ENCODE measurements at regions of chr1 and their contacts with region 1.

Region 1: GRCh38 chr1:205658943-205659581 is 21.2 kb downstream of the SLC45A3 start:
- DNase-seq: peak; percentile 75
- ATAC-seq: peak; percentile 95
- H3K4me3 Mint-ChIP-seq: no peak overlapping the region
- H3K27ac Mint-ChIP-seq: no peak overlapping the region
- H3K4me1 Mint-ChIP-seq: peaks cover 20% of the 10 kb centered on the region
- H3K27me3 Mint-ChIP-seq: no peaks in the 10 kb centered on the region
- CTCF ChIP-seq: peak; percentile 81

Region 2: DNA sequence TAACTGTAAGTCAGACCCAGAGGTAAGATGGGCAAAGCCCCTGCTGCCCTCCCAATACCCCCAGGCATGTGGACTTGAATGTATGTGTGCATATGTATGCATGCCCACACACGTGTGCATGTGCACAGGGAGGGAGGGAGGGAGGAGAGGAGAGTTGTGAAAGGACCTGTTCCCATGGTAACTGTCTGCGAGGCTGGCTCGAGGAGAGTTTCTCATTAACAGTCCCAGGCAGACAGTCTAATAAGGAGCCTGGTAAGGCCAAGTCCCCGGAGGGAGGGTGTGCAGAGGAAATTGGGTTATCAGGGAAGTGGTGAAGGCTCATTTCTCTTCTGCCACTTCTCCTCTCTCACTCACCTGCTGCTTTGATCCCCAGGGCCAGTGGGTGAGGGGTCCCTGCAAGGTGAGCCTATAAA is 713.5 kb before region 1 on chr1:
- CTCF ChIA-PET with region 1: no interaction called
- POLR2A ChIA-PET with region 1: no interaction called
- intact Hi-C with region 1: no loop called
- DNase-seq: no peak
- ATAC-seq: no peak
- H3K4me3 Mint-ChIP-seq: no peak overlapping the region
- H3K27ac Mint-ChIP-seq: no peak overlapping the region
- H3K4me1 Mint-ChIP-seq: no peaks in the 10 kb centered on the region
- H3K27me3 Mint-ChIP-seq: peaks cover 4% of the 10 kb centered on the region
- CTCF ChIP-seq: no peak

Region 3: DNA sequence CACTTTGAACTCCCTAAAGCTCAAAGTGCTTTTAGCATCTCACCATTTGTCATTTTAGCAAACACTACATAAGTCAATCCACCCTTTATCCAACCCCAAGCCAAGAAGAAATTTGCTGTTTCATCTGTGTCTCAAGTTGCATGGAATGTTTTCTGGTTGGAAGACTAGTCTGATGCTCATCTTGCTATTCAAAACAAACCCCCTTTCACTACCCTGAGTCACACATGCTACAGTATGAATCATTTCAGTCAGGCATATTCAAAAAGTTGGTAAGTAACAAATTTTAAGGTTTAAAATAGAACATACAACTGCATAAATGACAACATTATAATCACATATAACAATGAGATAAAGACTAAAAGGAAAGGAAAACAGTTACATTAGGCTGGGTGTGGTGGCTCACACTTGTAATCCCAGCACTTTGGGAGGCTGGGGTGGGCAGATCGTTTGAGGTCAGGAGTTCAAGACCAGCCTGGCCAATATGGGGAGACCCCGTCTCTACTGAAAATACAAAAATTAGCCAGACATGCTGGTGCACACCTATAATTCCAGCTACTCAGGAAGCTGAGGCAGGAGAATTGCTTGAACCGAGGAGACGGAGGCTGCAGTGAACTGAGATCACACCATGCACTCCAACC is 486.2 kb before region 1 on chr1:
- CTCF ChIA-PET with region 1: no interaction called
- POLR2A ChIA-PET with region 1: no interaction called
- intact Hi-C with region 1: no loop called
- DNase-seq: no peak
- ATAC-seq: no peak
- H3K4me3 Mint-ChIP-seq: no peak overlapping the region
- H3K27ac Mint-ChIP-seq: no peak overlapping the region
- H3K4me1 Mint-ChIP-seq: no peaks in the 10 kb centered on the region
- H3K27me3 Mint-ChIP-seq: no peaks in the 10 kb centered on the region
- CTCF ChIP-seq: no peak

Region 4: DNA sequence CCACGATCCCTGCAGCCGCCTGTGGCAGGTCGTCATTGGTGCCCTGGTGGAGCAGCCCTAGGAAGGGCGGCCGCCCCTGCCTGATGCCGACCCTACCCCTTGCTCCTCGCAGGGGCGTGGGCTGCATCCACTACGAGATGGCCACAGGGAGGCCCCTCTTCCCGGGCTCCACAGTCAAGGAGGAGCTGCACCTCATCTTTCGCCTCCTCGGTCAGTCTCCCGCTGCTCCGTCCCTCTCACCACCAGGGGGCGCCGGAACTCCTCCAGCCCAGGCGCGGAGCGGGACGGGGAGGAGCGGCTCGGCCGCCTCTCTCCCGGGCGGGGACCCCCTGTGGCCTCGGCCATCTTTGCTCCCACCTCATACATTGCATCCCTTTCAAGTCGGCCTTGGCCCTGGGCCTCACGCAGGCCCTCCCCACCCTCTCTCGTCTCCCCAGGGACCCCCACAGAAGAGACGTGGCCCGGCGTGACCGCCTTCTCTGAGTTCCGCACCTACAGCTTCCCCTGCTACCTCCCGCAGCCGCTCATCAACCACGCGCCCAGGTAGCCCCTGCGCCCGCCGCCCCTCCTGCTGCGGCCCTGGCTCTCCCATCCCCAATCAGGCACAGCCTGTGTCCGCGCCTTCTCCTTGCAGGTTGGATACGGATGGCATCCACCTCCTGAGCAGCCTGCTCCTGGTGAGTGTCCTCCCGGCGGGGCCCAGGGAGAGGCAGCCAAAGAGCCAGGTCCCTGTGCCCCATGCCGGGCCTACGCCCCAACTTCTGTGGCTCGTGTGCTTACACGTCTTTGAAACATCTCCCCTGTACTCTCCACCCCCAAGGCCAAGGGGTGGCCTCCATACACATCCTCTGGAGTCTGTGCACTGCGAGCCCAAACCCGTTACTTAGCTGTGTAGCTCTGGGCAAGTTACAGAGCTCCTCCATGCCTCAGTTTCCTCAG is 129.9 kb before region 1 on chr1:
- CTCF ChIA-PET with region 1: interaction called, 88 read pairs
- POLR2A ChIA-PET with region 1: no interaction called
- intact Hi-C with region 1: loop called (anchors 1 kb)
- DNase-seq: peak; percentile 84
- ATAC-seq: peak; percentile 92
- H3K4me3 Mint-ChIP-seq: peak overlapping the region; percentile 72
- H3K27ac Mint-ChIP-seq: no peak overlapping the region
- H3K4me1 Mint-ChIP-seq: peaks cover 4% of the 10 kb centered on the region
- H3K27me3 Mint-ChIP-seq: peaks cover 3% of the 10 kb centered on the region
- CTCF ChIP-seq: peak; percentile 58

Region 5: DNA sequence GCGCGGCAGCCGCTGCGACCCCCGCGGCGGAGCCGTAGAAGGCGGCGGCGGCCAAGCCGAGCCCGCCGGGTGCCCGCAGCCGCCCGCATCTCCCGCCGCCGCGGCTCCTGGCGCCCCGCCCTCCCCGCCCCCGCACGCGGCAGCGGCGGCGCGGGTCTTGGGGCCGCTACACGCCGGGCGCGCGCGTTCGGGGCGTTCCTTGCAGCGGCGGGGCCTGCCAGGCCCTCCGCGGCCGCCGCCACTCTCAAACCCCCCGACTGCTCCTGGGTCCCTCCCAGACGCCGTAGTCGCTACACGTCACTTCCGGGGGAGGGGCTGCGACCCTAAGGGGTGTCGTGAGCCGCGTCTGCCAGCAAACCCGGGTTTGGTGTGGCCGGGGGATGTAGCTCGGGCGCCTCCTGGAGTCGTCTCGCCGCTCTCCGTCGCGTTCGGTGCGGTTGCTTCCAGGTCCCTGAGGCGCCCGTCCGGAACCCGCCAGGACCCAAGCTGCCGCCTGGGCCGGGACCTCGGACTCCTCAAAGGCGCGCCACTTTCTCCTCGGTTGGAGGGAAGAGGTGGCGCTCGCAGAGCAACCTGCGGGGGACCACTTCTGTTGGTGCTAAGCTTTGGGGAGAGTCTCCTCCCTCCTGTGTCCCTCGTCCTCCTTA is 27.2 kb before region 1 on chr1 and contains the start of gene ELK4:
- CTCF ChIA-PET with region 1: interaction called, 54 read pairs
- POLR2A ChIA-PET with region 1: interaction called, 17 read pairs
- intact Hi-C with region 1: loop called (anchors 1 kb)
- DNase-seq: peak; percentile 99
- ATAC-seq: peak; percentile 83
- H3K4me3 Mint-ChIP-seq: peak within 1 kb of the TSS; percentile 96
- H3K27ac Mint-ChIP-seq: peak within 1 kb of the TSS; percentile 96
- H3K4me1 Mint-ChIP-seq: peaks cover 46% of the 10 kb centered on the region
- H3K27me3 Mint-ChIP-seq: no peaks in the 10 kb centered on the region
- CTCF ChIP-seq: no peak
- total RNA-seq, gene ELK4: 130 and 141 TPM in 2 replicates

Region 6: GRCh38 chr1:205729945-205730610 is 71.0 kb after region 1 on chr1:
- CTCF ChIA-PET with region 1: interaction called, 19 read pairs
- POLR2A ChIA-PET with region 1: interaction called, 3 read pairs
- intact Hi-C with region 1: no loop called
- DNase-seq: no peak
- ATAC-seq: no peak
- H3K4me3 Mint-ChIP-seq: no peak overlapping the region
- H3K27ac Mint-ChIP-seq: no peak overlapping the region
- H3K4me1 Mint-ChIP-seq: peaks cover 7% of the 10 kb centered on the region
- H3K27me3 Mint-ChIP-seq: no peaks in the 10 kb centered on the region
- CTCF ChIP-seq: no peak

Region 7: GRCh38 chr1:205907794-205908193 is 248.7 kb after region 1 on chr1:
- CTCF ChIA-PET with region 1: interaction called, 9 read pairs
- POLR2A ChIA-PET with region 1: no interaction called
- intact Hi-C with region 1: loop called (anchors 5 kb)
- DNase-seq: no peak
- ATAC-seq: no peak
- H3K4me3 Mint-ChIP-seq: no peak overlapping the region
- H3K27ac Mint-ChIP-seq: no peak overlapping the region
- H3K4me1 Mint-ChIP-seq: peaks cover 8% of the 10 kb centered on the region
- H3K27me3 Mint-ChIP-seq: peaks cover 3% of the 10 kb centered on the region
- CTCF ChIP-seq: no peak

Region 8: GRCh38 chr1:206544562-206545257 is 885.6 kb after region 1 on chr1:
- CTCF ChIA-PET with region 1: no interaction called
- POLR2A ChIA-PET with region 1: no interaction called
- intact Hi-C with region 1: no loop called
- DNase-seq: peak; percentile 81
- ATAC-seq: peak; percentile 93
- H3K4me3 Mint-ChIP-seq: no peak overlapping the region
- H3K27ac Mint-ChIP-seq: no peak overlapping the region
- H3K4me1 Mint-ChIP-seq: peaks cover 4% of the 10 kb centered on the region
- H3K27me3 Mint-ChIP-seq: no peaks in the 10 kb centered on the region
- CTCF ChIP-seq: peak; percentile 63

Measured in activated B cell treated with CpG ODN at 0.5 μM for 24 hours (primary cell).